ENCODE measurements at regions of chr4 and their contacts with region 1.

Region 1: GRCh38 chr4:135670548-135670947 is 1469.0 kb upstream of the PABPC4L start:
- DNase-seq: no peak
- H3K4me3 ChIP-seq: no peak overlapping the region
- H3K27ac ChIP-seq: no peak overlapping the region
- H3K4me1 ChIP-seq: no peaks in the 10 kb centered on the region
- H3K27me3 ChIP-seq: no peaks in the 10 kb centered on the region
- CTCF ChIP-seq: no peak
- POLR2A ChIP-seq: no peak

Region 2: DNA sequence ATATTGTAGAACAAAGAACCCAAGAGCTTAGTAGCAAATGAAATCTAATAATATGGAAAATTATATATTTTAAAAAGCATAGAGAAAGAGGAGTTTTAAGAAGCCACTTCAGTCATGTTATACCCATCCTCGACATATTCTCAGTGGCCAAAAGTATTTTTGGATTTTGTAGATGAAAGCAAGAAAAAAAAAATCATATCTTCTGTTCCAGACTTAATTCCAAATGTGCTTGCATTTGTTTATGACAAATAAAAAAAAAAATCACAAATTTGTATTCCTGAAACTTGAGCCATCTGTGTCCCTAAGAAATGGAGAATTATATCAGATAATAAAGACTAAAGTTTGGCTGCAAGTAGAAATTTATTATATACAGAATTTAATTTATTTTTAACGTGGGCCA is 13.5 kb after region 1 on chr4:
- intact Hi-C with region 1: loop called (anchors 2 kb)
- DNase-seq: no peak
- H3K4me3 ChIP-seq: no peak overlapping the region
- H3K27ac ChIP-seq: no peak overlapping the region
- H3K4me1 ChIP-seq: no peaks in the 10 kb centered on the region
- H3K27me3 ChIP-seq: no peaks in the 10 kb centered on the region
- CTCF ChIP-seq: no peak
- POLR2A ChIP-seq: no peak